Posterior vena cava (tissue), 2 donors: ENCODE measurements at regions of chrX and their contacts with region 1.

Region 1: GRCh38 chrX:65601530-65602220 is 65.8 kb upstream of the MSN start:
- DNase-seq: peak; percentile 95

Region 2: GRCh38 chrX:65575022-65575421 is 26.7 kb before region 1 on chrX:
- intact Hi-C with region 1: no loop called
- DNase-seq: no peak

Region 3: GRCh38 chrX:65635378-65635777 is 33.7 kb after region 1 on chrX:
- intact Hi-C with region 1: loop called in 1 of 2 experiments (anchors 5 kb)
- DNase-seq: no peak